Ascending aorta (tissue), 2 donors: ENCODE measurements at regions of chr5 and their contacts with region 1.

Region 1: GRCh38 chr5:14108170-14108996 is 34.8 kb upstream of the TRIO start:
- DNase-seq: peak in 1 of 2 donors; percentile 77
- H3K4me3 ChIP-seq: peak overlapping the region; percentile 0 to 50
- H3K27ac ChIP-seq: peak overlapping the region; percentile 19 to 27
- H3K4me1 ChIP-seq: peaks cover 2% of the 10 kb centered on the region in 2 donors
- H3K27me3 ChIP-seq: no peaks in the 10 kb centered on the region
- CTCF ChIP-seq: peak; percentile 40 to 83 (median 79)

Region 2: GRCh38 chr5:13780081-13780480 is 328.3 kb before region 1 on chr5:
- intact Hi-C with region 1: no loop called
- DNase-seq: no peak
- H3K4me3 ChIP-seq: no peak overlapping the region
- H3K27ac ChIP-seq: no peak overlapping the region
- H3K4me1 ChIP-seq: no peaks in the 10 kb centered on the region
- H3K27me3 ChIP-seq: no peaks in the 10 kb centered on the region
- CTCF ChIP-seq: no peak

Region 3: DNA sequence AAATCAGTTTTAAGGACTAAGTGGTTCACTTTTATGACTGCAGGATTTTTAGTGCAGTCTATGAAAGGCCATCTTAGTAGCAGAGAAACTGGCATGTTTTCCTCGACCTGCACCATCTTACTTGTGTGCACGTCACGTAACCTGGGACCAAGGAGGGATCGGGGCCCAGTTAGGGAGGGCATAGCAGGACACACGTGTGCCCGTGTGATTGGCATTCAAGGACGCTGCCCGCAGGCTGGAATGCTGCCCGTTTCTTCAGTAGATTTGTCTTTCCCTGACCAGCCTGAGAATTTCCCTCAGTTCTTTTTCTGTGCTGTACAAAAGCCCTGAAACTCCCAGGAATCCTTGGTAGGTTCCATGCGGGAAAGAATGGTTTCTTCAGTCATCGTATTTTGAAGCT is 231.1 kb after region 1 on chr5:
- intact Hi-C with region 1: loop called (anchors 5 kb)
- DNase-seq: no peak
- H3K4me3 ChIP-seq: no peak overlapping the region
- H3K27ac ChIP-seq: peak overlapping the region; percentile 64 to 74
- H3K4me1 ChIP-seq: peaks cover 4 to 31% of the 10 kb centered on the region in 2 donors
- H3K27me3 ChIP-seq: no peaks in the 10 kb centered on the region
- CTCF ChIP-seq: no peak